ENCODE measurements at regions of chr15 and their contacts with region 1.

Region 1: DNA sequence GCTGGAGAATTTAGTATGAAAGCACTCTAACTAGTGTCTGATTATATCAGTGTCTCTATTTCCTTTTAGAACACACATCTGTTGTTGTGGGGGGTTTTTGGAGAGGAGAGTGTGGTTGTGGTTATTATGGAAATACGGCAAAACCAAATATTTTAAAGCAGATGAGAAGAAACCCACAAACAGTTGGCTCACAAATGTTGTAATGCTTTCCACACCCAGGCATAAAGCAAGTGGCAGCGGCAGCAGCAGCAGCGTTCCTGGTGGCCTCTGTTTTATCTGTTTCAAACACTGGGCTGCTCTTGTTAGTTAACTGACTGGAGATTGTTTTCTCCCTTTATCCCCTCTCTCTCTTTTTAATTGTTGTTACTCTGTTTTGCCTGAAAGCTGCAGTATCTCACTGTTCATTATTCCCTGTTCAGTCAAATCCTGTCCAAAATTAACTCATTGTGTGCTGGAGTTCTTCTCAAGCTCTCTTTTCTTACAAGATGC is 1045.5 kb upstream of the NR2F2 start:
- DNase-seq: no peak
- ATAC-seq: peak; percentile 68
- H3K4me3 ChIP-seq: no peak overlapping the region
- H3K27ac ChIP-seq: no peak overlapping the region
- H3K4me1 ChIP-seq: peaks cover 4% of the 10 kb centered on the region; the same call in 1 of the 2 replicates
- H3K27me3 ChIP-seq: no peaks in the 10 kb centered on the region
- CTCF ChIP-seq: peak in 1 of 3 experiments; percentile 4; a peak in 1 of 6 replicates
- EP300 ChIP-seq: peak in 1 of 2 experiments; percentile 45; a peak in 1 of 4 replicates
- POLR2A ChIP-seq: no peak
- RAD21 ChIP-seq: 0 out of 2 replicates have a peak, but pooled peaks have one; percentile 18

Region 2: DNA sequence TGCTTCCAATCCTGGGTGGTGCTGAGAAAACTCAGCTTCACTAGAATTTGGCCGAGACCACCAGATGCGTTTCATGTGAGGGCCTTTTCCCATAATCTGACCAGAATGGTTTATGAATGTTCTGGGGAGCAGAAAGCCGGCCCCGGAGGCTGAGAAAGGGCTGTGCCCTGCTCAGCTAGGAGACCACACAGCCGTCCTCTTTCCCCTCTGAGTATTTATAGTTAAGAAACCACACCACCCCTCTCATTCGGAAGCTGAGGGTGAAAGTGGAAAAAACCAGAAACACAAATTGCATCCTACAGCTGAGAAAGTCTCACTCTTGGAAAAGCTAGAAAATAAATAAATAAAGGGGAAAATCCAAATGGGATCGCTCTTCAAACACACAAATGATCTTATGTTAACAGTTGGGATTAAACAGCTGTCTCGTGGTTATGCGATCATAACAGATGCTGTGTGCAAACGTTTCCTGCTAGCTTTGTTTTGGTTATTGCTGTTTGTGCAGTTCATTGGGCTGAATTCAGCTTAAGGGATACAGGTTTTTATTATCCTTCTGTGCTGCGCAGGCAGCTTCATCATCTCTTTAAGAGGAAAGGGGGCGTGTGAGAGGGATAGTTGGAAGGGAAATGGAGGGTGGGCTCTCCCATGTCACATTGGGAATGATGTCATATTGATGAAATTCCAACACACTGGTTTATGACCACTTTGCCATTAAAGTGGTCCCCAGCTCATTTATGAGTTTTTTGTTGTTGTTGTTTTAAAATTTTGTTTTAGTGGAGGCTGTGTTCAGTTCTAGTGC is 19.4 kb after region 1 on chr15:
- CTCF ChIA-PET with region 1: interaction called, 12 read pairs
- POLR2A ChIA-PET with region 1: interaction called, 12 read pairs
- RAD21 ChIA-PET with region 1: interaction called, 12 read pairs
- SMC1A ChIA-PET with region 1: interaction called, 44 read pairs
- in situ Hi-C with region 1: no loop called
- intact Hi-C with region 1: no loop called
- DNase-seq: no peak
- ATAC-seq: peak; percentile 67
- H3K4me3 ChIP-seq: no peak overlapping the region
- H3K27ac ChIP-seq: no peak overlapping the region
- H3K4me1 ChIP-seq: no peaks in the 10 kb centered on the region
- H3K27me3 ChIP-seq: no peaks in the 10 kb centered on the region
- CTCF ChIP-seq: no peak
- EP300 ChIP-seq: no peak
- POLR2A ChIP-seq: no peak
- RAD21 ChIP-seq: no peak

Region 3: DNA sequence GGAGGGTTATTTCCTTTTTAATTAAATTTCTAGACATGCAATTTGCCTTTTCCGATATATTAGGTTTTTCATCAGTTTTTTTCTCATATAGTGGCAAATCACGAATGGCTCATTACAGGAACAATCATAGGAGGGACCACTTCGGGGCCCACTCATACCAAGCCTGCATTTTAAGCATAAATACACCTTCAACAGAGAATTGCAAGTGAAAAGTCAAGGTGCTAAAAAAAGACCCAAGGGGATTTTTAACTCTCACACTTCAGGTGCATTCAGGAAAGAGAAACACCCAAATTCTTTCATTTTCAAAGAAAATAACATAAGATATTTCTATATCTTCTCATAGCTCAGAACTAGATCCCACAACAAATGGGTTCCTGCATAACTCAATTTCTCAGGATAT is 65.9 kb after region 1 on chr15:
- CTCF ChIA-PET with region 1: interaction called, 5 read pairs
- POLR2A ChIA-PET with region 1: no interaction called
- RAD21 ChIA-PET with region 1: interaction called, 27 read pairs
- SMC1A ChIA-PET with region 1: interaction called, 17 read pairs
- in situ Hi-C with region 1: no loop called
- intact Hi-C with region 1: no loop called
- DNase-seq: peak; percentile 9
- ATAC-seq: peak; percentile 83
- H3K4me3 ChIP-seq: no peak overlapping the region
- H3K27ac ChIP-seq: no peak overlapping the region
- H3K4me1 ChIP-seq: no peaks in the 10 kb centered on the region
- H3K27me3 ChIP-seq: no peaks in the 10 kb centered on the region
- CTCF ChIP-seq: peak in 1 of 3 experiments; percentile 8; a peak in 1 of 6 replicates
- EP300 ChIP-seq: peak in 1 of 2 experiments; percentile 59; a peak in 1 of 4 replicates
- POLR2A ChIP-seq: no peak
- RAD21 ChIP-seq: no peak

Region 4: GRCh38 chr15:95448531-95449220 is 163.7 kb after region 1 on chr15:
- CTCF ChIA-PET with region 1: no interaction called
- POLR2A ChIA-PET with region 1: interaction called, 7 read pairs
- RAD21 ChIA-PET with region 1: no interaction called
- SMC1A ChIA-PET with region 1: interaction called, 10 read pairs
- in situ Hi-C with region 1: no loop called
- intact Hi-C with region 1: no loop called
- DNase-seq: no peak
- ATAC-seq: no peak
- H3K4me3 ChIP-seq: no peak overlapping the region
- H3K27ac ChIP-seq: no peak overlapping the region
- H3K4me1 ChIP-seq: no peaks in the 10 kb centered on the region
- H3K27me3 ChIP-seq: no peaks in the 10 kb centered on the region
- CTCF ChIP-seq: no peak
- EP300 ChIP-seq: no peak
- POLR2A ChIP-seq: no peak
- RAD21 ChIP-seq: no peak

Measured in GM12878 (cell line).